Right cardiac atrium (tissue), 5 donors: ENCODE measurements at regions of chr4 and their contacts with region 1.

Region 1: DNA sequence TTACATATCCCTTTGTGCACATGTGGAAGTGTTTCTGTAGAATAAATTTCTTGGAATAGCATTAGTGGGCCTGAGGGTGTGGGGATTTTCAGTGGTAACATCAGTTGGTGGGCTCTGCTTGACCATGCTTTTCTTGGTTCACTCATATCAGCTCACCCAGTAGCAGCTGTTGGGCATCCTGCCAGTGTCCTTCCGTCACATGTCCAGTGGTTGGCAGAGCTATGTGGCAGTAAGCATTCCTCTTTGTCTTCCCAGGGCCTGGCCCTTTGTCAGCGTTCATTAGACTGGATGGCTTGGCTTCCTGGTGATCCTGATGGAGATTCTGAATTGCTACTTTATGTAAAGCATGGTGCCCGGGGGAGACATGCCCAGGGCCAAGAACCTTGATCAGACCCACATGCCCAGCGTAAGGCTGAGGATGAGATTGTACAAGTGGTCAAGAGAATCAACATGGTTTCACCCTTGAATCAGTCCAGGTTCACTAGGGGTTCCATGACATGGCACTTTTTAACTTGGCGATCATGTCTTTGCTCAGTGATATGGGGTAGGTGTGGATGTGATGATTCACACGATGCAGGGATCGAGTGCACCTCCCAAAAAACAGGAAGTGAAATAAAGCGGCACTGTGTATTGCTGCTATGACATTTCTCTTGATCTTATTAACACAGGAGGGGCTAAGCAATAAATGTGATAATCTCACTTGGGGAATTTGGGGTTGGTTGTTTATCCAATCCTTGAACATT is 72.1 kb upstream of the IGFBP7 start:
- DNase-seq: peak; percentile 56 to 87 (median 83)
- ATAC-seq: peak; percentile 63 to 83
- H3K4me3 ChIP-seq: no peak overlapping the region
- H3K27ac ChIP-seq: no peak overlapping the region
- H3K4me1 ChIP-seq: no peaks in the 10 kb centered on the region
- H3K27me3 ChIP-seq: no peaks in the 10 kb centered on the region

Region 2: DNA sequence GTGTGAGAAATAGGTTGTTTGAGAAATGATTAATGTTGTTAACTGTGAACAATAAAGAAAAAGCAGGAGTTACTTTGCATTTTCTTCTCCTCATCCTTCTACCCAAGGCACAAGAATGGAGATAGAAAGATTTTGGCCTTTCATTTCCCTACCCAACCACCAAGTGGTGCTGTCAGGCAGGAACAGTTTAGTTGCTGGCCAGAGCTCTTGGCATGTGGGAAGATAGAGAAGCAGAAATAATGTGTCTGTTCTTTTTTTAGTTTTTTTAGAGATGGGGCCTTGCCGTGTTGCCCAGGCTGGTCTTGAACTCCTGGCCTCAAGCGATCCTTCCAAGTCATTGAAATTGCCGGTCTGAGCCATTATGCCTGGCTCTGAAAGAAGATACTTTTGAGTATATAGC is 514.0 kb before region 1 on chr4:
- intact Hi-C with region 1: no loop called
- DNase-seq: no peak
- ATAC-seq: no peak
- H3K4me3 ChIP-seq: no peak overlapping the region
- H3K27ac ChIP-seq: no peak overlapping the region
- H3K4me1 ChIP-seq: no peaks in the 10 kb centered on the region
- H3K27me3 ChIP-seq: no peaks in the 10 kb centered on the region

Region 3: DNA sequence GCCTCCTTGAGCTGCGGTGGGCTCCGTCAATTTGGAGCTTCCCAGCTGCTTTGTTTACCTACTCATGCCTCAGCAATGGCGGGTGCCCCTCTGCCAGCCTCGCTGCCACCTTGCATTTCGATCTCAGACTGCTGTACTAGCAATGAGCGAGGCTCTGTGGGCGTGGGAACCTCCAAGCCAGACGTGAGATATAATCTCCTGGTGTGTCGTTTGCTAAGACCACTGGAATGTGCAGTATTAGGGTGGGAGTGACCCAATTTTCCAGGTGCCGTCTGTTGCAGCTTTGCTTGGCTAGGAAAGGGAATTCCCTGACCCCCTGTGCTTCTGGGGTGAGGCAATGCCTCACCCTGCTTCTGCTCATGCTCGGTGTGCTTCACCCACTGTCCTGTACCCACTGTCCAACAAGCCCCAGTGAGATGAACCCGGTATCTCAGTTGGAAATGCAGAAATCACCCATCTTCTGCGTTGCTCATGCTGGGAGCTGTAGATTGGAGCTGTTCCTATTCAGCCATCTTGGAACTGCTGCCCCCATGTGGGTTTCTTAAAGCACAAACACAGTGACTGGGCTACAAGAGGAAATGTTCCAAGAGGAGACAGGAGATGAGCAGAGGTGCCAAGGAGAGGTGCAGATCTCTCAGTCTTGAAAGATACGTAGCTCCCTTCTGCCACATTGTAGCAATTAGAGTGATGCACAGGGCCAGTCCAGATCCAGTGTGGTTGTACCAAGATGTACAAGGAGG is 120.9 kb after region 1 on chr4:
- intact Hi-C with region 1: loop called in 1 of 4 experiments (anchors 10 kb)
- DNase-seq: no peak
- ATAC-seq: no peak
- H3K4me3 ChIP-seq: no peak overlapping the region
- H3K27ac ChIP-seq: no peak overlapping the region
- H3K4me1 ChIP-seq: no peaks in the 10 kb centered on the region
- H3K27me3 ChIP-seq: no peaks in the 10 kb centered on the region

Region 4: GRCh38 chr4:57442831-57443291 is 260.6 kb after region 1 on chr4:
- intact Hi-C with region 1: no loop called
- DNase-seq: peak in 2 of 3 donors; percentile 12 to 62
- ATAC-seq: peak in 1 of 2 donors; percentile 31
- H3K4me3 ChIP-seq: no peak overlapping the region
- H3K27ac ChIP-seq: no peak overlapping the region
- H3K4me1 ChIP-seq: no peaks in the 10 kb centered on the region
- H3K27me3 ChIP-seq: no peaks in the 10 kb centered on the region